ENCODE measurements at regions of chrX and their contacts with region 1.

Region 1: DNA sequence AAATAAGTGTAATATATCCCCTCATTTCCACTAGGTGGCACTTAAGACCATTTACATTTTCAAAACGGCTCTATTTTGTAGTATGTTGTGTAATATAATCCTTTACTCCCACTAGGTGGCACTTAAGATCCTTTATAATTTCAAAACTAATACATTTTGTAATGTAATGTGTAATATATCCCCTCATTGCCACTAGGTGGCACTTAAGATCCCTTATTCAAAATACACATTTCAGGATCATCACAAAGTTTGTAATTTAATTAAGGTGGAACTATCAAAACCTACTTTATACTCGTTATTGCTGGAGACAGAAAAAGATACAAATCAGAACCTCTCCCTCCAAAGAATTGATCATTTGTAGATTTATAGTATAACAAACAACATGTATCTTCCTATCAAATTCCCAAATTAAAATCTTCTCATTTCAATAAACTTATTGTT is 132.5 kb downstream of the ARHGAP6 start:
- DNase-seq: no peak
- H3K4me3 ChIP-seq: no peak overlapping the region
- H3K27ac ChIP-seq: no peak overlapping the region
- H3K4me1 ChIP-seq: peaks cover 0 to 17% (median 7%) of the 10 kb centered on the region in 4 donors
- H3K27me3 ChIP-seq: no peaks in the 10 kb centered on the region
- CTCF ChIP-seq: peak; percentile 72 to 98 (median 95)
- EP300 ChIP-seq: no peak
- POLR2A ChIP-seq: no peak

Region 2: DNA sequence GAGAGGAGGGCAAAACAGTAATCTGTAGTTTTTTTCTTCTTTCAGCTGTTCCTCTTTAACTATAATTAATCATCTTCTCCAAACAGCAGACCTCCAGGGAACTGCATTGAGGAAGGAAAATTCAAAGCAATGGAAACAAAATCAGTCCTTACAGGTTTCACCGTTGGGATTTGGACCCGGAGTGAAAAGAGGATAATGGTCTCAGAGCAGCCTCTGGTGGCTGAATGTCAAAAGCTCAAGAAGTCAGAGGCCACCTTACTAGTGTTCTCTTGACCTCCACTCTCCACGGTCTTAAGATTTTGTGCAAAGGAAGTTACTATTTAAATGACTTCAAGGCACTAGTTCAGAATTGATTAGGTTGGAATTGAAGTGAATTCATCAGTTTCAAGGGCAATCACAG is 896.9 kb before region 1 on chrX:
- intact Hi-C with region 1: no loop called
- DNase-seq: no peak
- H3K4me3 ChIP-seq: peak overlapping the region in 1 of 4 donors; percentile 20
- H3K27ac ChIP-seq: peak overlapping the region; percentile 36 to 55 (median 48)
- H3K4me1 ChIP-seq: peaks cover 0 to 27% (median 19%) of the 10 kb centered on the region in 4 donors
- H3K27me3 ChIP-seq: no peaks in the 10 kb centered on the region
- CTCF ChIP-seq: peak; percentile 44 to 63 (median 58)
- EP300 ChIP-seq: no peak
- POLR2A ChIP-seq: no peak

Region 3: GRCh38 chrX:11143931-11144678 is 389.1 kb before region 1 on chrX:
- intact Hi-C with region 1: loop called (anchors 2 kb)
- DNase-seq: no peak
- H3K4me3 ChIP-seq: no peak overlapping the region
- H3K27ac ChIP-seq: no peak overlapping the region
- H3K4me1 ChIP-seq: peaks cover 0 to 9% (median 0%) of the 10 kb centered on the region in 4 donors
- H3K27me3 ChIP-seq: no peaks in the 10 kb centered on the region
- CTCF ChIP-seq: peak; percentile 57 to 65 (median 62)
- EP300 ChIP-seq: no peak
- POLR2A ChIP-seq: no peak

Region 4: DNA sequence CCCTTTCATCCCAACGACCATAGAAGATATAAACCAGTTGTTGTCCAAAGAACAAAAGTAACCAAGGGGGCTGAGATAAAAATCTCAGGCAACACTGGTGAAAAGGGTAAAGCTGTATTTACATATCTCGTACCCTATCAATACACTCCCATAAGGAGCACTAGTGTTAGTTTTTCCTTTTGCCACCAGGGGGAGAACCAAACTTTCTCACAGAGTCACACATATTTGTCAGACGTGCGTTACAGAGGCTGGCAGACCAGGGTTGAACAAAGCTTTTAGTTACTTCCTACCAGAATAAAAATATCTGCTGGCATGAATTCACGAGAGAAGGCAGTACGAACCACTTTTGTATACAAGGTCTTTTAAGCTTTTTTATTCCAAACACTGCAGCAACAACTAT is 151.8 kb before region 1 on chrX:
- intact Hi-C with region 1: loop called (anchors 2 kb)
- DNase-seq: no peak
- H3K4me3 ChIP-seq: no peak overlapping the region
- H3K27ac ChIP-seq: peak overlapping the region in 3 of 4 donors; percentile 22 to 47 (median 42)
- H3K4me1 ChIP-seq: peaks cover 6 to 30% (median 13%) of the 10 kb centered on the region in 4 donors
- H3K27me3 ChIP-seq: no peaks in the 10 kb centered on the region
- CTCF ChIP-seq: peak; percentile 54 to 63 (median 56)
- EP300 ChIP-seq: no peak
- POLR2A ChIP-seq: no peak

Region 5: DNA sequence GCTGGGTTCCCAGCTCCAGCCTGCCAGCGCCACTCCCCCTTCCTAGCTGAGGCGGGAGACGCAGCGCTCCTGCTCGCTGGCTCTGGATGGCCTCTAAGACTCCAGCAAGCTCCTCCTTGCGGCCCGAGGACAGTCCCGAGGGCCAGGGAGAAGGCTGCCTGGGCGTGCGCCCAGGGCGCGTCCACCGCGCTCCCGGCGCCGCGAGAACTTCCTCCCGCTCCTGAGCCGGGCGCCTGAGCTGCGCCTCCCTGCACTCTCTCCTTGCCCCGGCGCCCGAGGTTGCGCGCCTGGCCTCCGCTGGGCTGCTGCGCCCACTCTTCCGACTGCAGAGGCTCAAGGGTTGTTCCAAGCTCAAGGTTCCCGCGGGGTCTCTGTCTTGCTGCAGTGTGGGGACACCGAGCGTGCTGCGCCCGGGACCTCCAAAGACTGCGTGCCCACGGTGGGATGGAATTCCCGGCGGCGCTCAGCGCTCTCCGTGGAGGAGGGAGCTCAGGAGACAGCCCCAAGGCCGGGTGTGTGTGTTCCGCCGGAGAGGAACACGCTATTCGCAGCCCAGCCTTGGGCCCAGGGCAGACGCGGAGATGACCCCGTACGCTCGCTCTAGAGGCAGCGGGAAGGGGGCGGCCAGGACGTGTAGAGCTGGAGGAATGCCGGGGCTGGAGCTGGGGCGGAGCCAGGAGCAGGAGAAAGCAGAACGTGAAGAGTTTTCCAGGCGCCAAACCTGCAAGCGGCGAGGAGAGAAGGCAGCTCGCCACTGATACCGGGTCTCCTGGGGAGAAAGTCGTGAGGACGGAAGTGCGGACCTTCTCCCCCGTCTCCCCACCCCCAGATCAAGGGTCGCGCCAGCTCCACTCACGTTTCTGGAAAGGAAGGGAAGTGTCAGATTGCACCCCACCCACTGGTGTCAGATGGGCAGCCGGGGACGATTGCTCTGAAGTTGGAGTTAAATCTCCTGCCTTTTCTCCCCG is 132.2 kb after region 1 on chrX and contains the start of gene ARHGAP6:
- intact Hi-C with region 1: loop called (anchors 5 kb)
- DNase-seq: no peak
- H3K4me3 ChIP-seq: peak within 1 kb of the TSS; percentile 58 to 67 (median 61)
- H3K27ac ChIP-seq: peak within 1 kb of the TSS; percentile 73 to 81 (median 80)
- H3K4me1 ChIP-seq: peaks cover 0 to 18% (median 7%) of the 10 kb centered on the region in 4 donors
- H3K27me3 ChIP-seq: peaks cover 0 to 3% (median 0%) of the 10 kb centered on the region in 4 donors
- CTCF ChIP-seq: no peak
- EP300 ChIP-seq: no peak
- POLR2A ChIP-seq: no peak
- total RNA-seq, gene ARHGAP6: 25.2 to 44.8 (median 30.6) TPM

Region 6: GRCh38 chrX:11724122-11725017 is 191.1 kb after region 1 on chrX:
- intact Hi-C with region 1: loop called (anchors 2 kb)
- DNase-seq: no peak
- H3K4me3 ChIP-seq: no peak overlapping the region
- H3K27ac ChIP-seq: no peak overlapping the region
- H3K4me1 ChIP-seq: peaks cover 0 to 4% (median 0%) of the 10 kb centered on the region in 4 donors
- H3K27me3 ChIP-seq: no peaks in the 10 kb centered on the region
- CTCF ChIP-seq: peak; percentile 65 to 73 (median 70)
- EP300 ChIP-seq: no peak
- POLR2A ChIP-seq: no peak

Region 7: GRCh38 chrX:11770320-11770719 is 237.1 kb after region 1 on chrX:
- intact Hi-C with region 1: loop called (anchors 2 kb)
- DNase-seq: no peak
- H3K4me3 ChIP-seq: no peak overlapping the region
- H3K27ac ChIP-seq: no peak overlapping the region
- H3K4me1 ChIP-seq: peaks cover 0 to 4% (median 0%) of the 10 kb centered on the region in 4 donors
- H3K27me3 ChIP-seq: no peaks in the 10 kb centered on the region
- CTCF ChIP-seq: peak; percentile 72 to 83 (median 74)
- EP300 ChIP-seq: no peak
- POLR2A ChIP-seq: no peak